Ovary (tissue), 10 donors: ENCODE measurements at regions of chr2 and their contacts with region 1.

Region 1: DNA sequence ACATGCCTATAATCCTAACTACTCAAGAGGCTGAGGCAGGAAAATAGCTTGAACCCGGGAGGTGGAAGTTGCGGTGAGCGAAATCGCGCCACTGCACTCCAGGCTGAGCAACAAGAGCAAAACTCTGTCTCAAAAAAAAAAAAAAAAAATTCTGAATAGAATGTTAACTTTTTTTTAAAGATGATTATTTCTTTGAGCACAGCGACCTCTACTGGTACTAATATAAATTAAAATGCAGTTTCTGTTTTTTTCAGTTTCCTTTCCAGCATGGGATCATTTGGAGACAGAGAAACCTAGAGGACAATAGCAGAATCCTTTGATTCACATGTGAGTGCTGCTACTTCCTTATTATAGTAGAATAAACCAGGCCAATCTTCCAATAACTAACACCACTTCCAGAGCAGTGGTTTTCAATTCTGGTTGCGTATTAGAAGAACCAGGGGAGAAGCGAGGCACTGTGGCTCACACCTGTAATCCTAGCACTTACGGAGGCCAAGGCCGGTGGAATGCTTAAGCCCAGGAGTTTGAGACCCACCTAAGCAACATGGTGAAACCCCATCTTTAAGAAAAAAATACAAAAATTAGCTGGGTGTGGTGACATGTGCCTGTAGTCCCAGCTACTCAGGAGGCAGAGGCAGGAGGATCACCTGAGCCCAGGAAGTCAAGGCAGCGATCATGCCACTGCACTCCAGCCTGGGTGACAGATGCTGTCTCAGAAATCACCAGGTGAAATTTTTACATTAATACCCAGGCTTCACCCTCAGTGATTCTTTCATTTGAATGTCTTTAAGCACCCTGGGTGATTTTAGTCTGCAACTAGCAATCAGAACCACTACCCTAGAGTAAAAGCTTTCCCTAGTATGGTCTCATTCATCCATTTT is 10.1 kb downstream of the SRSF7 start:
- DNase-seq: peak in 3 of 5 donors; percentile 38 to 57 (median 38)
- H3K4me3 ChIP-seq: no peak overlapping the region
- H3K27ac ChIP-seq: no peak overlapping the region
- H3K4me1 ChIP-seq: no peaks in the 10 kb centered on the region
- H3K27me3 ChIP-seq: no peaks in the 10 kb centered on the region
- CTCF ChIP-seq: peak; percentile 62 to 78 (median 67)
- EP300 ChIP-seq: no peak
- POLR2A ChIP-seq: no peak

Region 2: DNA sequence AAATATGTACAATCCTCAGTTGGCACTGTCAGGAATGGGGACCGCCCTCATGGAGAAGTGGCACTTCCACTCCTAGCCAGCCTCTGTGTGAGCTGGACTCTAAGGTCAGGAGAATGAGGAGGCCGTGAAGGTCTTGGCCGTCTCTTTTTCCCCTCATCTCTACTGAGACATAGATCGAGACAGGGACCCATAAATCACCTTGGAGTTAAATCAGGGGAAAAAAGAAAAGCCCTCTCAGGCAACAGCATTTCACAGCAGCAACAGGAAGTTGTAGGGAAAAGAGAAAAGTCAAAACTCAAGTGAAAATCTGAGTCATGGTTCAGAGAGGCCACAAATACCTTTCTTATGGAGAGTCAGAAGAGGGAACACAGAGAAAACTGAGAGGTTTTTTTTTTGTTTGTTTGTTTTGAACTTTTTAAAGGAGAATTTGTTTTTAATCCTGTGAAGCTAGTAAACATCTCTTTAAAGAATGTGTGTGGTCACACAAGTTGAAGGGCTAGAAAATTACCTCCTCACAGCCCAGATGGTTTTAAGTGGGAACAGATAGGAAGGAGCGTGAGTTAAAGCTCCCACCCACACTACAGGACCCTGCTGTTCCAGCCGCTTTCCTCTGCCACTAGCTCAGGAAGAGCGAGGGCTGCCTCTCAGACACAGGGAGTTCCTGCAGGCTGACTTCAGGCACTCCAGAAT is 634.5 kb before region 1 on chr2:
- intact Hi-C with region 1: no loop called
- DNase-seq: no peak
- H3K4me3 ChIP-seq: no peak overlapping the region
- H3K27ac ChIP-seq: peak overlapping the region; percentile 46 to 74
- H3K4me1 ChIP-seq: peaks cover 9% of the 10 kb centered on the region
- H3K27me3 ChIP-seq: no peaks in the 10 kb centered on the region
- CTCF ChIP-seq: no peak
- EP300 ChIP-seq: no peak
- POLR2A ChIP-seq: no peak

Region 3: DNA sequence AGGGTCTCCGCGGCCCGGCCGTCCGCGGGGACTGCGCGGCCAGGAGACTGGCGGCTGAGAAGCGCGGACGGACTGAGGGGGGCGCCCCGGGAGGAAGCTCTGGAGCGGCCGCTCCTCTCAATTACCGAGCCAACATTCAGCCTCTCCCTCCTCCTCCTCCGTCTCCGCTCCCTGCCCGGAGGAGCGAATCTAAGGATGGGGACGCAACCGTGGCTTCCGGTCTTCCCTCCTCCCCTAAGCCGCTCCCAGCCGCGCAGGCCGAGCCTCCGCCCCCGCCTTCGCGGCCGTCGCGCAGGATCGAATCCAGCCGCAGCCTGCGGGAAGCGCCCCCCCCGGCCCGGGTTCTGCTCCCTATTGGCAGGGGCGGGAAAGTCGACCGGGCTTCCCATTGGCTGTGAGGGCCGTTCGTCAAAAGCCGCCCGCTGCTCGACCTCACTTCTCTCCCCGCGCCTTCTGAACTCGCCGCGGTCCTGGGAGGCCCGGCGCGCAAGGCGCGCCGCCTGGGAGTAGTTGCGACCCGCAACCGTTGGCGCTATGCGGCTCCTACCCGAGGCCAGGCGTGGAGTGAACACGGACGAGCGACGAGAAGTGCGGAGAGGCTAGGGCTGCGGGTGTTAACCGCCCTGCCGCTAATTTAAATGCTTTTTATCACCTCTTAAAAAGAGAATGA is 138.2 kb before region 1 on chr2 and contains the start of gene HNRNPLL:
- intact Hi-C with region 1: loop called in 1 of 4 experiments (anchors 10 kb)
- DNase-seq: peak; percentile 98 to 99 (median 99)
- H3K4me3 ChIP-seq: peak within 1 kb of the TSS; percentile 79
- H3K27ac ChIP-seq: peak within 1 kb of the TSS; percentile 95 to 98
- H3K4me1 ChIP-seq: peaks cover 8% of the 10 kb centered on the region
- H3K27me3 ChIP-seq: no peaks in the 10 kb centered on the region
- CTCF ChIP-seq: no peak
- EP300 ChIP-seq: peak; percentile 22
- POLR2A ChIP-seq: peak; percentile 97
- total RNA-seq, gene HNRNPLL: 46.9 to 59.2 (median 48.9) TPM

Region 4: DNA sequence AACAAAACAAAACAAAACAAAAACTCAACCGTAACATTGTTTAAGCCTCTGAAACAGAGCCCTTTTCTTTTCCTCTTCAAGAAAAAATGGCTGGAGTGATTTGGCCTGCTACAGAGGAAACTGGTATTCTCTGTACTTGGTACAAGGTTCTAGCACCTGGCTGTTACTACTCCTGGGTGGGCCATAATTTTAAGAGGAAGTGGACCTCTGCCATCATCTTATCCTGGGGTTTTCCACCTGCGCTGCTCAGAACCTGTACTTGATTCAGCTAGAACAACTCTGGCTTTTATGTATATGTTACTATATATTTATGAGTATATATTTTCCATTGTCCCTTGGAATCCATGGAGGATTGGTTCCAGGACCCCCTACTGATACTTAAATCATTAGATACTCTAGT is 12.4 kb before region 1 on chr2:
- intact Hi-C with region 1: loop called in 2 of 4 experiments (anchors 2 kb)
- DNase-seq: no peak
- H3K4me3 ChIP-seq: no peak overlapping the region
- H3K27ac ChIP-seq: no peak overlapping the region
- H3K4me1 ChIP-seq: no peaks in the 10 kb centered on the region
- H3K27me3 ChIP-seq: no peaks in the 10 kb centered on the region
- CTCF ChIP-seq: no peak
- EP300 ChIP-seq: no peak
- POLR2A ChIP-seq: no peak